CD8-positive, alpha-beta T cell (primary cell): ENCODE measurements at regions of chr1 and their contacts with region 1.

Region 1: GRCh38 chr1:153922972-153923925 is at the start of gene GATAD2B:
- DNase-seq: peak; percentile 97 to 100 (median 99)
- ATAC-seq: peak; percentile 89
- H3K4me3 ChIP-seq: peak within 1 kb of the TSS; percentile 81 to 83
- H3K4me3 Mint-ChIP-seq: peak within 1 kb of the TSS; percentile 93
- H3K27ac ChIP-seq: peak within 1 kb of the TSS; percentile 83 to 95
- H3K27ac Mint-ChIP-seq: peak within 1 kb of the TSS; percentile 97
- H3K4me1 ChIP-seq: peaks cover 44% of the 10 kb centered on the region
- H3K4me1 Mint-ChIP-seq: peaks cover 44% of the 10 kb centered on the region
- H3K27me3 ChIP-seq: no peaks in the 10 kb centered on the region
- H3K27me3 Mint-ChIP-seq: no peaks in the 10 kb centered on the region
- CTCF ChIP-seq: no peak
- total RNA-seq, gene GATAD2B: 52.0 to 52.1 TPM

Region 2: GRCh38 chr1:153796791-153797659 is 126.2 kb before region 1 on chr1:
- CTCF ChIA-PET with region 1: interaction called, 13 read pairs
- POLR2A ChIA-PET with region 1: interaction called, 5 read pairs
- intact Hi-C with region 1: loop called in 1 of 2 experiments (anchors 5 kb)
- DNase-seq: peak; percentile 73 to 90 (median 86)
- ATAC-seq: peak; percentile 98
- H3K4me3 ChIP-seq: no peak overlapping the region
- H3K4me3 Mint-ChIP-seq: no peak overlapping the region
- H3K27ac ChIP-seq: no peak overlapping the region
- H3K27ac Mint-ChIP-seq: peak overlapping the region; percentile 53
- H3K4me1 ChIP-seq: peaks cover 24% of the 10 kb centered on the region
- H3K4me1 Mint-ChIP-seq: peaks cover 19% of the 10 kb centered on the region
- H3K27me3 ChIP-seq: no peaks in the 10 kb centered on the region
- H3K27me3 Mint-ChIP-seq: no peaks in the 10 kb centered on the region
- CTCF ChIP-seq: peak; percentile 90

Region 3: DNA sequence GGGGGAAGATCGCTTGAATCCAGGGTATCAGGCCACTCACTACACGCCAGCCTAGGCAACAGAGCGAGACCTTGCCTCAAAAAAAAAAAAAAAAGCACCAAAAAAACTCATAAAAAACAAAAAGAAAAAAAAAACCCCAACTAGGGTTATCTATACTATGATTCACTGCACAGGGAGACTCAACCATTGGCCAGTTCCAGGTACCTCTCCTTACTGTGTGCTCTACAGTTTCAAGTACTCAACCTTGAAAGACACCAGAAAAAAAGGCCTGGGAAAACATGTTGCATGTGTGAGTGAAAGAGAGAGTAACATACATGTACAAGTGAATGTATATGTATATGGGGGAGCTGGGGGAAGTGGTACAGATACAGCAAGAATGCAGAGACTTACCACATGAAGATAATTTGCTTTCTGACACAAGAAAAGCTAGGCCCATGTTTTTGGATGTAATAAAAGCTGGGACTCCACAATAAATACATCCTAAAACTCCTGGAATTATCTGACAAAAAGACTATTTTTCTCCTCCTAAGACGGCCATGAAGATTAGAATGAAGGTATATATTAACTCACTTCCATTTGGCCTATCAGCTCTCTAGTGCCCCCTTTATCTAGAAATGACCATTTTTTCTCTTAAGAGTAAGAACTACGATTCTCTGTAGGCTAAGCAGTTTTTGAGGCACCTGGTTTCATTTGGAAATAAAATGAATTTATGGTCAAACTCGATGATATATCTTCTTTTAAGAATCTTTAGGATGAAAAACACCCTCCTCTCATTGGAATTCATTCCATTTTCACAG is 95.9 kb before region 1 on chr1:
- CTCF ChIA-PET with region 1: interaction called, 3 read pairs
- POLR2A ChIA-PET with region 1: no interaction called
- intact Hi-C with region 1: loop called in 1 of 2 experiments (anchors 5 kb)
- DNase-seq: no peak
- ATAC-seq: no peak
- H3K4me3 ChIP-seq: no peak overlapping the region
- H3K4me3 Mint-ChIP-seq: no peak overlapping the region
- H3K27ac ChIP-seq: no peak overlapping the region
- H3K27ac Mint-ChIP-seq: peak overlapping the region; percentile 16
- H3K4me1 ChIP-seq: peaks cover 6% of the 10 kb centered on the region
- H3K4me1 Mint-ChIP-seq: peaks cover 6% of the 10 kb centered on the region
- H3K27me3 ChIP-seq: no peaks in the 10 kb centered on the region
- H3K27me3 Mint-ChIP-seq: no peaks in the 10 kb centered on the region
- CTCF ChIP-seq: no peak

Region 4: GRCh38 chr1:153946622-153947241 is 23.5 kb after region 1 on chr1 and contains the start of gene DENND4B:
- CTCF ChIA-PET with region 1: interaction called, 40 read pairs
- POLR2A ChIA-PET with region 1: interaction called, 57 read pairs
- intact Hi-C with region 1: loop called (anchors 1 kb)
- DNase-seq: peak; percentile 43 to 87 (median 75)
- ATAC-seq: peak; percentile 61
- H3K4me3 ChIP-seq: peak within 1 kb of the TSS; percentile 71 to 84
- H3K4me3 Mint-ChIP-seq: peak within 1 kb of the TSS; percentile 94
- H3K27ac ChIP-seq: peak within 1 kb of the TSS; percentile 81 to 95
- H3K27ac Mint-ChIP-seq: peak within 1 kb of the TSS; percentile 86
- H3K4me1 ChIP-seq: peaks cover 33% of the 10 kb centered on the region
- H3K4me1 Mint-ChIP-seq: peaks cover 25% of the 10 kb centered on the region
- H3K27me3 ChIP-seq: no peaks in the 10 kb centered on the region
- H3K27me3 Mint-ChIP-seq: no peaks in the 10 kb centered on the region
- CTCF ChIP-seq: peak; percentile 95
- total RNA-seq, gene DENND4B: 87.2 to 91.3 TPM

Region 5: GRCh38 chr1:153967082-153968000 is 44.1 kb after region 1 on chr1 and contains the start of gene CREB3L4:
- CTCF ChIA-PET with region 1: interaction called, 9 read pairs
- POLR2A ChIA-PET with region 1: interaction called, 18 read pairs
- intact Hi-C with region 1: loop called (anchors 1 kb)
- DNase-seq: peak; percentile 62 to 97 (median 81)
- ATAC-seq: peak; percentile 84
- H3K4me3 ChIP-seq: peak within 1 kb of the TSS; percentile 77 to 79
- H3K4me3 Mint-ChIP-seq: peak within 1 kb of the TSS; percentile 86
- H3K27ac ChIP-seq: peak within 1 kb of the TSS; percentile 66 to 78
- H3K27ac Mint-ChIP-seq: peak within 1 kb of the TSS; percentile 95
- H3K4me1 ChIP-seq: peaks cover 41% of the 10 kb centered on the region
- H3K4me1 Mint-ChIP-seq: peaks cover 51% of the 10 kb centered on the region
- H3K27me3 ChIP-seq: no peaks in the 10 kb centered on the region
- H3K27me3 Mint-ChIP-seq: no peaks in the 10 kb centered on the region
- CTCF ChIP-seq: peak; percentile 15
- total RNA-seq, gene CREB3L4: 3.0 to 3.7 TPM

Region 6: DNA sequence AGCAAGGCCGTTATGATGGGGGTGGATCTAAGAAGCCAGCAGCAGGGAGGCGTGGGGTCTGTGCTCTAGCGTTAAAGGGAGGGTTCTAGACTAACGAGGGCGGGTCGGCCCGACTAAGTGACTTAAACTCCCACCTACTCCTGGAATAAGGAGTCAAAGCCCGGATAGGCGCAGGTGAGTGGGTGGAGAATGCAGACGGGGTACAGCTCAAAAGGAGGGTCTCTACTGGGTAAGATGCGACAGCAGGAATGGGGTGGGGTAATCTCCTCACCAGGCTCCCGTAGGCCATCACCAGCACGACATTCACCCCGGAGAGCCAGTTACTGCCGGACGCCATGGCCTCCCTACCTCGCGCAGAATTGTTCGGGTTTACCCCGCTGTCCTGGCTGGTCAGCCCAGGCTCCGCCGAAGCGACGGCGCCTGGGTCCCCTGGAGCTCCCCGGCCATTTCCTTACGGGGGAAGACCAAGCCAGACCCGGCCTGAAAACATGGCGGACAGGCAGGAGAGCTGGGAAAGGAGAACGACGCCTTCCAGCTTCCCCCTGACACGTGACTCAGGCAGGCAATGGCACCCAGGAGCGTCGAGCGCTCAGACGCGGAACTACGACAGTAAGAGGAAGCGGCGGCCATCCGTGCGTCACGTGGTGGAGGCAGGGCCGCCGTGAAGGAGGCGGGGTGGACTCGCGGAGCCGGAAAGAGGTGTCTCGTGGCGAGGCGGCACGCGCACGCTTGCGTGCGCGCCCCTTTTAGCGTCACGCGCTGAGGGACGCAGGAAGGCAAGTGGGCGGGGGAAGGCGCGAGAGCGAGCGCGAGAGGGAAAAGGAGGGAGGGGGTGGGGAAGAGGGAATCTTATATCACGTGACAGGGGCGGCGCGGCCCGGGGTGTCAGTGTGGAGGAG is 297.1 kb after region 1 on chr1 and contains the start of gene UBAP2L:
- CTCF ChIA-PET with region 1: no interaction called
- POLR2A ChIA-PET with region 1: no interaction called
- intact Hi-C with region 1: loop called in 1 of 2 experiments (anchors 5 kb)
- DNase-seq: peak; percentile 97 to 100 (median 99)
- ATAC-seq: peak; percentile 82
- H3K4me3 ChIP-seq: peak within 1 kb of the TSS; percentile 68 to 93
- H3K4me3 Mint-ChIP-seq: peak within 1 kb of the TSS; percentile 95
- H3K27ac ChIP-seq: peak within 1 kb of the TSS; percentile 93 to 99
- H3K27ac Mint-ChIP-seq: peak within 1 kb of the TSS; percentile 99
- H3K4me1 ChIP-seq: peaks cover 54% of the 10 kb centered on the region
- H3K4me1 Mint-ChIP-seq: peaks cover 71% of the 10 kb centered on the region
- H3K27me3 ChIP-seq: no peaks in the 10 kb centered on the region
- H3K27me3 Mint-ChIP-seq: no peaks in the 10 kb centered on the region
- CTCF ChIP-seq: no peak
- total RNA-seq, gene UBAP2L: 212 to 226 TPM